ENCODE measurements at regions of chr16 and their contacts with region 1.

Region 1: GRCh38 chr16:84302111-84302954 is 7.7 kb downstream of the WFDC1 start:
- DNase-seq: no peak
- H3K4me3 ChIP-seq: no peak overlapping the region
- H3K27ac ChIP-seq: no peak overlapping the region
- H3K4me1 ChIP-seq: peaks cover 9 to 16% (median 13%) of the 10 kb centered on the region in 4 experiments
- H3K27me3 ChIP-seq: peaks cover 0 to 2% (median 0%) of the 10 kb centered on the region in 4 experiments; a peak in 1 of 7 replicates
- CTCF ChIP-seq: no peak
- EP300 ChIP-seq: no peak
- POLR2A ChIP-seq: no peak
- RAD21 ChIP-seq: no peak

Region 2: DNA sequence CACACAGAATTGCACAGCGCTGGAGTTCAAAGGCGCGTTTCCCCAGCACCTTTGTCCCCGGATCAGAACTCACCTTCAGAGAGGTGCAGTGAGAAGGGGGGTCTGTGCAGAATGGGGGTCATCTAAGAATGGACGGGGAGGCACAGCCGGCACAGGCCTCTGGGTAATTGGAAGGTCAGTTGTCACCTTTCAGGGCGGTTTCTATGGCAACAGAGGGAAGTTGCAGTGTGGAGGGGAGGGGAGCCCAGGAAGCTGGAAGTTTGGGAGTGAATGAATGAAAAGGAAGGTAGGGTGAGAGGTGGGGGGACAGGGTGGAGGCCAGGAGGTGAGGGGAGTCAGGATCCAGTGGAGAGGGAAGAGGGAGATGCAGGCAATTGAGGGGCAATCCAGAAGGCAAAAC is 50.1 kb before region 1 on chr16:
- CTCF ChIA-PET with region 1: no interaction called
- POLR2A ChIA-PET with region 1: no interaction called
- DNase-seq: no peak
- H3K4me3 ChIP-seq: no peak overlapping the region
- H3K27ac ChIP-seq: 0 out of 2 replicates have a peak overlapping the region, but pooled peaks have one; percentile 22
- H3K4me1 ChIP-seq: no peaks in the 10 kb centered on the region
- H3K27me3 ChIP-seq: peaks cover 0 to 3% (median 0%) of the 10 kb centered on the region in 4 experiments; a peak in 1 of 7 replicates
- CTCF ChIP-seq: no peak
- EP300 ChIP-seq: no peak
- POLR2A ChIP-seq: no peak
- RAD21 ChIP-seq: no peak

Region 3: DNA sequence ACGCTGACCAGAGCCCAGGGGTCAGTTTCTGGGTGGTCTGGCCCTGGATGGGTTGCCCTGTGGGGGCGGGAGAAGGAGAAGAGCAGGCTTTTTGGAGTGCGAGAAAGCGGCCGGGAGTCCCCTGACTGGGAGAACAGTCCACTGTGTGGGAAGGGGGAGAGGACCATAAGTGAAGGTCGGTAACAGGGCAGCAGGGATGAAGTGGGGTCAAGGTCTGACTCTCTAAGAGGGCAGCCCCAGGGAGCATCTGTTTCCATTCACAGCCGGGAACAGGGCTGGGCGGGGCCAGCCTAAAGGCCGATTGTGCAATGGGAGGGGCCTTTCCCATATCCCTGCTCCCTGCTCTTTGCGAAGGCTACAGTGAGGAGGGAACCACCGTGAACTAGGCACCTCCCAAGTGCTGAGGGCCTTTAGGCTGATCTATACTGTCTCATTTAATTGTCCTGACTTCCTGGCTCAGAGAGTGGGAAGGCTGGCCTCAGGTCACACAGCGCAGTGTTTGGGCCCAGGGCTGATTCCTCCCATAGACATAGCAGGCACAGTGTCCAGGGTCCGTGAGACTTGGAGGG is 18.1 kb before region 1 on chr16:
- CTCF ChIA-PET with region 1: interaction called, 212 read pairs
- POLR2A ChIA-PET with region 1: interaction called, 13 read pairs
- DNase-seq: peak in 1 of 2 experiments; percentile 77
- H3K4me3 ChIP-seq: peak overlapping the region in 2 of 4 experiments; percentile 6 to 15; a peak in 3 of 8 replicates
- H3K27ac ChIP-seq: no peak overlapping the region
- H3K4me1 ChIP-seq: peaks cover 0 to 19% (median 9%) of the 10 kb centered on the region in 4 experiments; a peak in 6 of 7 replicates
- H3K27me3 ChIP-seq: no peaks in the 10 kb centered on the region; a peak in 3 of 7 replicates
- CTCF ChIP-seq: no peak
- EP300 ChIP-seq: no peak
- POLR2A ChIP-seq: no peak
- RAD21 ChIP-seq: no peak